Kidney (tissue), 22 donors: ENCODE measurements at regions of chr1 and their contacts with region 1.

Region 1: GRCh38 chr1:181166377-181167196 is 78.1 kb downstream of the IER5 start:
- DNase-seq: peak in 4 of 5 donors; percentile 77 to 93 (median 86)
- H3K4me3 ChIP-seq: peak overlapping the region in 1 of 3 donors; percentile 13
- H3K27ac ChIP-seq: no peak overlapping the region
- H3K4me1 ChIP-seq: peaks cover 0 to 2% (median 0%) of the 10 kb centered on the region in 3 donors
- H3K27me3 ChIP-seq: no peaks in the 10 kb centered on the region
- CTCF ChIP-seq: peak; percentile 84

Region 2: DNA sequence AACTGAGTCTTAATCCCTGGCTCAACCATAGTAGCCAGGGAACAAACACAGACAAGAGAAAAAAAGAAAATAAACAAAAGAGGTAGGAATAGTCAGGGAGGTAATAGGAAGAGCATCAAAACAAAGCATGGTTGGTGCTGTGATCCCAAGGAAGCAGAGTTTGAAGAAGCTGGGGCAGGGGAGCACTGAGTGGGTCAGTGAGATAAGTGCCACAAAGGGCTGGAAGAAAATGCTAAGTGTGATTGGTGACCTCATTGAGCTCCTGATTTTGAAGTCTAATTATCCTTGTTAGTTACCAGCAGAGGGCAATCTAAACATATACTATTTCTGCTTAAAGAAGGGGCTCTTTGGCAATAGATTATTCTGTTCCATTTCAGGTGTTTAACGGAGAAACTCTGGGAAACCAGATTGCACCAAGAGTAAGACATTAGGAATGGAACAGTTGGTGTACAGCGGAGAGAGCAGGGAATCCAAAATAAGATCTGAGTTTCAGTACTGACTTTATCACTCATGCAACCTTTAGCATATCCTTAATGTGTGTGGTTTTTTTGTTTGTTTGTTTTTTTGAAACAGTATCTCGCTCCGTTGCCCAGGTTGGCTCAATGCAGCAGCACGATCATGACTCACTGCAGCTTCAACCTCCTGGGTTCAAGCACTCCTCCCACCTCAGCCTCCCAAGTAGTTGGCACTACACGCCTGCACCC is 284.6 kb before region 1 on chr1:
- intact Hi-C with region 1: loop called (anchors 10 kb)
- DNase-seq: peak in 2 of 5 donors; percentile 65 to 66
- H3K4me3 ChIP-seq: no peak overlapping the region
- H3K27ac ChIP-seq: no peak overlapping the region
- H3K4me1 ChIP-seq: no peaks in the 10 kb centered on the region
- H3K27me3 ChIP-seq: no peaks in the 10 kb centered on the region
- CTCF ChIP-seq: peak; percentile 20